Mammary epithelial cell (primary cell): ENCODE measurements at regions of chr17 and their contacts with region 1.

Region 1: DNA sequence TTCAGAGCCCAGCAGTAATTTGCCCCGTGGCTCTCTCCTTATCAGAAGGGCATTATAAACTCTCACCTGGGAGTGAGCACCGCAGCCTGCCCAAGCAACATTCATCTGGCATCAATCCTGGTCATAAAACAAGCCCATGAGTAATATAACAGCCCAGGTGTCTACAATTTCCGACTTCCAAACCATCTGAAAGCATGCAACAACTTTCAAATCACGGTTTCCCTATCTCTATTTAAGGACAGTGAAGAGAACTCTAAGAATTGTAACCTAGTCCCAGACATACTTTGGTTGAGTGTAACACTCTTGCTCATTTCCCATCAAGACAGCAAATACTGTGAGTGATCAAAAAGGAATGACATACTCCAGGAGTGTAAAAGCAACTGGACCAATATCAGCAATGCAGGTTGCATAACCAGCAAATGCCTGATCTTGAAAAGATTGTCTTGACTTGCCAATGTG is 487.4 kb upstream of the SOX9 start:
- DNase-seq: peak; percentile 99
- H3K4me3 ChIP-seq: peak overlapping the region in 1 of 3 experiments; percentile 14
- H3K27ac ChIP-seq: peak overlapping the region; percentile 75
- H3K4me1 ChIP-seq: peaks cover 43% of the 10 kb centered on the region
- H3K27me3 ChIP-seq: no peaks in the 10 kb centered on the region
- CTCF ChIP-seq: no peak

Region 2: DNA sequence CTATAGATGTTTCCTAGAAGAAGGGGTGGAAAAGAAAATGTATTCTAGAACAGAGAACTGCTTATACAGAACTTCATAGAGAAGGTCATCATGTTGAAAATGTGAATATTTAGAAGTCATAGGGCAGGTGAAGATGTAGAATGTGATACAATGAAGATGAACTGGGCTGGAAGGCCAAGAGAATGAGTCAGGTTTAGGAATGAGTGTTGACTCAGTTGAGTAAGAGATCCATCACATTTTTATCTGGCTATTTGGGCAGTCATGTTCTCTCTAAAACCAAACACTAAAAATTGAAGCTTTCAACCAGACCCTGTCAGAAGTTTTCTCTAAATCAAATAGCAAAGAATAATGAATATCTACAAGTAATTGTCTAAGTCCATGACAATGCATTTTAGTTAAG is 803.5 kb before region 1 on chr17:
- CTCF ChIA-PET with region 1: no interaction called
- dilution Hi-C with region 1: no loop called
- in situ Hi-C with region 1: no loop called
- intact Hi-C with region 1: no loop called
- DNase-seq: no peak
- H3K4me3 ChIP-seq: no peak overlapping the region
- H3K27ac ChIP-seq: no peak overlapping the region
- H3K4me1 ChIP-seq: no peaks in the 10 kb centered on the region
- H3K27me3 ChIP-seq: no peaks in the 10 kb centered on the region
- CTCF ChIP-seq: no peak

Region 3: GRCh38 chr17:71438631-71439146 is 194.7 kb before region 1 on chr17:
- CTCF ChIA-PET with region 1: no interaction called
- dilution Hi-C with region 1: no loop called
- in situ Hi-C with region 1: no loop called
- intact Hi-C with region 1: loop called (anchors 5 kb)
- DNase-seq: peak; percentile 96
- H3K4me3 ChIP-seq: no peak overlapping the region
- H3K27ac ChIP-seq: peak overlapping the region; percentile 82
- H3K4me1 ChIP-seq: peaks cover 37% of the 10 kb centered on the region
- H3K27me3 ChIP-seq: no peaks in the 10 kb centered on the region
- CTCF ChIP-seq: no peak

Region 4: GRCh38 chr17:71530248-71530647 is 103.2 kb before region 1 on chr17:
- CTCF ChIA-PET with region 1: no interaction called
- dilution Hi-C with region 1: no loop called
- in situ Hi-C with region 1: no loop called
- intact Hi-C with region 1: loop called (anchors 2 kb)
- DNase-seq: peak; percentile 99
- H3K4me3 ChIP-seq: no peak overlapping the region
- H3K27ac ChIP-seq: peak overlapping the region; percentile 39
- H3K4me1 ChIP-seq: peaks cover 51% of the 10 kb centered on the region
- H3K27me3 ChIP-seq: no peaks in the 10 kb centered on the region
- CTCF ChIP-seq: no peak

Region 5: DNA sequence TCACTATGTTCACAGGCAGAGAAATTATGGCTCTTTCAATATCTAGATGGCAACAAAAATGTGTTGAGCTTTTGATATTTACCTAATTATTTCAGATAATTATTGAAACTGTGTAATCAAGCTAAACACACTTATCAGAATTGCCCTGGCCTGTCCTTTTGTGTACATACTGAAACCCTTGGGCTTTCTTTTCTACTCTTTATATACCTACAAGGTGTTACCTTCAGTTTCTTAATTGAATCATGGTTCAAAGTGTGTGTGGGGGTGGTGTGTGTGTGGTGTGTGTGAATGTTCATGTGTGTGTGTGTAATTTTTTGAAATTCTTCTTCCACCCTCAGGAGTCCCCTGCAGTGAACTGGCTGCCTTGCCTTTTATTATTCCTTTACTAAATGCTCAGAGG is 19.4 kb before region 1 on chr17:
- CTCF ChIA-PET with region 1: no interaction called
- dilution Hi-C with region 1: no loop called
- in situ Hi-C with region 1: no loop called
- intact Hi-C with region 1: no loop called
- DNase-seq: no peak
- H3K4me3 ChIP-seq: no peak overlapping the region
- H3K27ac ChIP-seq: no peak overlapping the region
- H3K4me1 ChIP-seq: no peaks in the 10 kb centered on the region
- H3K27me3 ChIP-seq: no peaks in the 10 kb centered on the region
- CTCF ChIP-seq: no peak

Region 6: GRCh38 chr17:71792966-71793365 is 159.5 kb after region 1 on chr17:
- CTCF ChIA-PET with region 1: no interaction called
- dilution Hi-C with region 1: no loop called
- in situ Hi-C with region 1: no loop called
- intact Hi-C with region 1: loop called (anchors 1 kb)
- DNase-seq: peak; percentile 96
- H3K4me3 ChIP-seq: no peak overlapping the region
- H3K27ac ChIP-seq: peak overlapping the region; percentile 46
- H3K4me1 ChIP-seq: peaks cover 26% of the 10 kb centered on the region
- H3K27me3 ChIP-seq: no peaks in the 10 kb centered on the region
- CTCF ChIP-seq: no peak